OCI-LY7 (cell line): ENCODE measurements at regions of chr10 and their contacts with region 1.

Region 1: GRCh38 chr10:91251430-91252056 is 31.1 kb downstream of the PCGF5 start:
- DNase-seq: peak; percentile 68
- H3K4me3 ChIP-seq: no peak overlapping the region
- H3K27ac ChIP-seq: no peak overlapping the region
- H3K4me1 ChIP-seq: no peaks in the 10 kb centered on the region
- CTCF ChIP-seq: peak; percentile 98

Region 2: GRCh38 chr10:90912174-90912573 is 339.4 kb before region 1 on chr10:
- CTCF ChIA-PET with region 1: no interaction called
- POLR2A ChIA-PET with region 1: interaction called, 10 read pairs
- intact Hi-C with region 1: loop called (anchors 2 kb)
- DNase-seq: no peak
- H3K4me3 ChIP-seq: no peak overlapping the region
- H3K27ac ChIP-seq: no peak overlapping the region
- H3K4me1 ChIP-seq: no peaks in the 10 kb centered on the region
- CTCF ChIP-seq: no peak

Region 3: GRCh38 chr10:91006001-91006751 is 245.4 kb before region 1 on chr10:
- CTCF ChIA-PET with region 1: interaction called, 18 read pairs
- POLR2A ChIA-PET with region 1: interaction called, 3 read pairs
- intact Hi-C with region 1: loop called (anchors 1 kb)
- DNase-seq: peak; percentile 65
- H3K4me3 ChIP-seq: no peak overlapping the region
- H3K27ac ChIP-seq: no peak overlapping the region
- H3K4me1 ChIP-seq: no peaks in the 10 kb centered on the region
- CTCF ChIP-seq: peak; percentile 93

Region 4: GRCh38 chr10:91088300-91089140 is 163.0 kb before region 1 on chr10:
- CTCF ChIA-PET with region 1: interaction called, 4 read pairs
- POLR2A ChIA-PET with region 1: interaction called, 9 read pairs
- intact Hi-C with region 1: loop called (anchors 1 kb)
- DNase-seq: peak; percentile 37
- H3K4me3 ChIP-seq: no peak overlapping the region
- H3K27ac ChIP-seq: no peak overlapping the region
- H3K4me1 ChIP-seq: no peaks in the 10 kb centered on the region
- CTCF ChIP-seq: peak; percentile 65

Region 5: GRCh38 chr10:91220194-91220953 is 31.2 kb before region 1 on chr10 and contains the start of gene PCGF5:
- CTCF ChIA-PET with region 1: interaction called, 3 read pairs
- POLR2A ChIA-PET with region 1: interaction called, 3 read pairs
- intact Hi-C with region 1: loop called (anchors 2 kb)
- DNase-seq: peak; percentile 94
- H3K4me3 ChIP-seq: peak within 1 kb of the TSS; percentile 82
- H3K27ac ChIP-seq: peak within 1 kb of the TSS; percentile 75
- H3K4me1 ChIP-seq: peaks cover 34% of the 10 kb centered on the region
- CTCF ChIP-seq: no peak
- total RNA-seq, gene PCGF5: 25.1 and 32.5 TPM in 2 replicates

Region 6: DNA sequence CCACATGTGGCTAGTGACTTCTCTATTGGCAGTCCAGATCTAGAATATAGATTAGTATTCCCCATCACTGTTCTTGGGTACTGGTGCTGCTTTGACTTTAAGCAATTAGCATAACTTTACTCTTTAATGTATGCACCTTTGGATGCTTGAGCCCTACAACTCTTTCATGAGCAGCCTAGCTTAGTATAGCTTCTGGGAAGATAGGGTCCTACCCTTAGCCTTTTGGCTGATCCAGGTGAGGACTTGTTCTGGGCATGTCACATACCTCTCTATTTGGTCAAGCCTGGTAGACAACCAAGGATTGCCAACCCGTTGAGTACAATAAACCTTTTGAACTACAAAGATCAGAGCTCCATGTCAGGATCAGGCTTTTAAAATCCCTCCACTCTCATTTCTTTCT is 13.4 kb before region 1 on chr10:
- CTCF ChIA-PET with region 1: no interaction called
- POLR2A ChIA-PET with region 1: interaction called, 11 read pairs
- intact Hi-C with region 1: no loop called
- DNase-seq: no peak
- H3K4me3 ChIP-seq: no peak overlapping the region
- H3K27ac ChIP-seq: no peak overlapping the region
- H3K4me1 ChIP-seq: no peaks in the 10 kb centered on the region
- CTCF ChIP-seq: no peak

Region 7: DNA sequence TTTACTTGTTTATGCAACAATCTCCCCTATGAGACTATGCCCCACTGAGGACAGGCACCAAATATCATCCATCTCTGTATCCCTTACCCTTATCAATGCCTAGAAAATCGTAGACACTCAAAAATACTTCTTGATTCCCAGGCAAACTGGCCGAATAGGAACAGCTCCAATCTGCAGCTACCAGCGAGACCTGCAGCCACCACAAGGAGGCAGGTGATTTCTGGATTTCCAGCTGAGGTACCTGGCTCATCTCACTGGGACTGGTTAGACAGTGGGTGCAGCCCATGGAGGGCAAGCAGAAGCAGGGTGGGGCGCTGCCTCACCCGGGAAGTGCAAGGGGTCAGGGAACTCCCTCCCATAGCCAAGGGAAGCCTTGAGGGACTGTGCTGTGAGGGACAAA is 392.2 kb after region 1 on chr10:
- CTCF ChIA-PET with region 1: no interaction called
- POLR2A ChIA-PET with region 1: no interaction called
- intact Hi-C with region 1: no loop called
- DNase-seq: no peak
- H3K4me3 ChIP-seq: no peak overlapping the region
- H3K27ac ChIP-seq: no peak overlapping the region
- H3K4me1 ChIP-seq: no peaks in the 10 kb centered on the region
- CTCF ChIP-seq: no peak

Region 8: GRCh38 chr10:91829268-91829667 is 577.7 kb after region 1 on chr10:
- CTCF ChIA-PET with region 1: no interaction called
- POLR2A ChIA-PET with region 1: no interaction called
- intact Hi-C with region 1: no loop called
- DNase-seq: no peak
- H3K4me3 ChIP-seq: no peak overlapping the region
- H3K27ac ChIP-seq: no peak overlapping the region
- H3K4me1 ChIP-seq: no peaks in the 10 kb centered on the region
- CTCF ChIP-seq: no peak